Endothelial cell of umbilical vein (primary cell): ENCODE measurements at regions of chr12 and their contacts with region 1.

Region 1: GRCh38 chr12:90773491-90773890 is 181.5 kb downstream of the CCER1 start:
- DNase-seq: no peak
- H3K4me3 ChIP-seq: no peak overlapping the region
- H3K27ac ChIP-seq: no peak overlapping the region
- H3K4me1 ChIP-seq: peaks cover 12% of the 10 kb centered on the region
- H3K27me3 ChIP-seq: no peaks in the 10 kb centered on the region
- CTCF ChIP-seq: no peak
- POLR2A ChIP-seq: no peak

Region 2: GRCh38 chr12:90211017-90211416 is 562.5 kb before region 1 on chr12:
- CTCF ChIA-PET with region 1: no interaction called
- POLR2A ChIA-PET with region 1: no interaction called
- dilution Hi-C with region 1: no loop called
- intact Hi-C with region 1: loop called (anchors 2 kb)
- DNase-seq: peak; percentile 96
- H3K4me3 ChIP-seq: no peak overlapping the region
- H3K27ac ChIP-seq: peak overlapping the region; percentile 85
- H3K4me1 ChIP-seq: peaks cover 16% of the 10 kb centered on the region
- H3K27me3 ChIP-seq: no peaks in the 10 kb centered on the region
- CTCF ChIP-seq: no peak
- POLR2A ChIP-seq: peak; percentile 62

Region 3: GRCh38 chr12:90816353-90817089 is 43.0 kb after region 1 on chr12:
- CTCF ChIA-PET with region 1: no interaction called
- POLR2A ChIA-PET with region 1: no interaction called
- dilution Hi-C with region 1: no loop called
- intact Hi-C with region 1: loop called (anchors 5 kb)
- DNase-seq: peak; percentile 91
- H3K4me3 ChIP-seq: no peak overlapping the region
- H3K27ac ChIP-seq: no peak overlapping the region
- H3K4me1 ChIP-seq: peaks cover 9% of the 10 kb centered on the region
- H3K27me3 ChIP-seq: peaks cover 0 to 1% of the 10 kb centered on the region in 2 experiments
- CTCF ChIP-seq: no peak
- POLR2A ChIP-seq: no peak